ENCODE measurements at regions of chr6 and their contacts with region 1.

Region 1: DNA sequence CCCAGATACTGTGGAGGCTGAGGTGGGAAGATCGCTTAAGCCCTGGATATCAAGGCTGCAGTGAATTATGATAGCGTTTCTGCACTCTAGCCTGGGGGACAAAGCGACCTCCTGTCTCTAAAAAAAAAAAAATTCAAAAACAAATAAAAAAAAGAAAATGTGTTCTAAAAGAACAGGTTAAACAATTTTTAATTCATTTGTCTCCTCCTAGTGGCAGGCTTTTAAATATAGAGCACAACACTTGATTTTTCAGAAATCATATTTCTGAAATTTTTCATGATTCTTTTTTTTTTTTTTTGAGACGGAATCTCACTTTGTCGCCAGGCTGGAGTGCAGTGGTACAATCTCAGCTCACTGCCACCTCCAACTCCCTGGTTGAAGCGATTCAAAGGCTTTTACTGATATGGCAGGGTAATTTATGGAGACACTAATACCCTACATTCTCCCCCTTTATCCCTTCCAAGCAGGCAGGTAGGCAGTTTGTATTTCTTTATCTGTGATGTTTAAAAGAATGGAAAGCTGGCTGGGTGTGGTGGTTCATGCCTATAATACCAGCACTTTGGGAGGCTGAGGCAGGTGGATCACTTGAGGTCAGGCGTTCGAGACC is 8.7 kb upstream of the GTF3C6 start:
- DNase-seq: no peak
- ATAC-seq: no peak
- H3K4me3 ChIP-seq: no peak overlapping the region
- H3K27ac ChIP-seq: no peak overlapping the region
- H3K4me1 ChIP-seq: no peaks in the 10 kb centered on the region
- H3K27me3 ChIP-seq: no peaks in the 10 kb centered on the region
- CTCF ChIP-seq: peak; percentile 64

Region 2: DNA sequence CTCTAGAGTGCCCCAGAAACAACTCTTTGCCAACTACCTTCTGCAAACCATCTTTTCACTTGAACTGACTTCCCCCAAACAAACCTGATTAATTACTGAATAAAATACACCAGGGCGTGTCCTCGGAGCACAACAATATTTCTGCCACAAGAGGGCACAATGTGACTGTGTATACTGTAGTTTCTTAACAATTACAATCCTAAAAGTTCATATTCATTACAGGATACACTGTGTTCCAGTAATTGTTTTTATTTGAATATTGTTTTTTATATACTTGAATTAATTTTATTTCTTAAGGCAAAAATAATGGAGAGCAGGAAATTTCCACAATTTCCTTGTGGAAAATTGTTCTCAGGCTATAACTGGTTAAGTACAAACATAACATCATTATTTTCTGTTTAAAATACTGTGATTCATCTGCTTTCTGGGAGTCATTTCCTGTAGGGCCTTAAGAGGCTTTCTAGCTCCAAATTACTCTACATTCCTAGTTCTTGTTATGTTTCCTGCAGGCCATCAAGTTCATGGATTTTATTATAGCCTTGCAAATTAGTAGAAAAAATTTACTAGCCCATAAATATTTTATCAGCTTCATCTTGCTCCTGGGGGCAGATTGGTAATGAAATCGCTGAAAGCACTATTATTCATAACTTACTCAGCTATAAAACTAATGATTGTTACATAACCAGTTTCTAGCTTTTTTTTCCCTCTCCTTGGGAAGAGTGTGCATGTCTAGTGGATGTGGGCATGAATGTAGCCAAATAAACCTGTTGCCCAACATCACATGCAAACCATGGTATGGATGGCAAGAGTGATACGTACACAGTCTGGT is 421.5 kb before region 1 on chr6:
- intact Hi-C with region 1: loop called (anchors 5 kb)
- DNase-seq: no peak
- ATAC-seq: peak; percentile 89
- H3K4me3 ChIP-seq: no peak overlapping the region
- H3K27ac ChIP-seq: no peak overlapping the region
- H3K4me1 ChIP-seq: no peaks in the 10 kb centered on the region
- H3K27me3 ChIP-seq: no peaks in the 10 kb centered on the region
- CTCF ChIP-seq: peak; percentile 75

Region 3: GRCh38 chr6:110682460-110682853 is 267.3 kb before region 1 on chr6:
- intact Hi-C with region 1: loop called (anchors 5 kb)
- DNase-seq: no peak
- ATAC-seq: peak; percentile 99
- H3K4me3 ChIP-seq: no peak overlapping the region
- H3K27ac ChIP-seq: no peak overlapping the region
- H3K4me1 ChIP-seq: no peaks in the 10 kb centered on the region
- H3K27me3 ChIP-seq: no peaks in the 10 kb centered on the region
- CTCF ChIP-seq: peak; percentile 75